Heart right ventricle (tissue), 16 donors: ENCODE measurements at regions of chr3 and their contacts with region 1.

Region 1: DNA sequence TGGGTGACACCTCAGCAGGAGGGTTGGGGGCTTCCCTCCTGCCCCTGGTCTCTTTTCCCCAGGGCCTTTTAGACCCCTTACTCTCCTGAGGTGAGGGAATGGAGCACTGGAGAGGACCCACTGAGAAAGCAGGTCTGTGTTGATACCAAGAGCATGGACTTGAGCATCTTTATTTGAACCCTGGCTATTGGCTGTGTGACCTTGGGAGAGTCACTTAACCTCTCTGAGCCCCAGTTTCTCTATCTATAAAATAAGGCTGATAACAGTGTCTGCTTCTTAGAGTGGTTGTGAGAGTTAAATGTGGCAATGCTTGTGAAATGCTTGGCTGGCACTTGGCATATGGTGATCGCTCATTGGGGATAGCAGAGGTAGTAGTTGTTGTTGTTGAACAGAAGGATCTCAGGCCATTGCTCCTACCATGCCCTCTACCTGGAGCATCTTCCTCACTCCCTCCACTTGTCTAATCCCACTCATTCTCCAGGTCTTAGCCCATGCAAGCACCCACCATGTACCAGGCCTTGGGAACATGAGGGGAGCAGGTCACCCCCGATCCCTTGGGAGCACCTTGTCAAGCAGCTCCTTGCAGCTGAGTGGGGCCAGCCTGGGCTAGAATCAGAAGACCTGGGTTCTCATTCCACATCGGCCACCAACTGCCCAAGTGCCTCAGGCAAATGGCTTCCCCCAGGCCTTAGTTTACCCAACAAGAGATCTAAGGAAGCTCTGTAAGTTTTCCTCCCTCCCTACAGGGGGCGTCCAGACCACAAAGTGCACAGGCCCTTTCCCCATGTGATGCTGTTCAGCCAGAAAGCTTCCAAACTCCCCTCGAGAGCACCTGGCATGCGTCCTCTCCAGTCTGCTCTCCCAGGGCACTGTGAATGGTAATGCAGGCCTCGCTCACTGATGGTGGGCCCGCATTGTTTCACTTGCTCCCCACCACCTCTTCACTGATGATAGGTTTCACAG is 96.7 kb downstream of the LSM3 start:
- DNase-seq: no peak
- ATAC-seq: no peak
- H3K4me3 ChIP-seq: no peak overlapping the region
- H3K27ac ChIP-seq: no peak overlapping the region
- H3K4me1 ChIP-seq: no peaks in the 10 kb centered on the region
- H3K27me3 ChIP-seq: peaks cover 0 to 75% (median 26%) of the 10 kb centered on the region in 7 donors
- CTCF ChIP-seq: peak in 5 of 9 donors; percentile 16 to 45 (median 30)

Region 2: GRCh38 chr3:13623099-13623654 is 652.1 kb before region 1 on chr3:
- intact Hi-C with region 1: no loop called
- DNase-seq: no peak
- ATAC-seq: no peak
- H3K4me3 ChIP-seq: no peak overlapping the region
- H3K27ac ChIP-seq: no peak overlapping the region
- H3K4me1 ChIP-seq: no peaks in the 10 kb centered on the region
- H3K27me3 ChIP-seq: no peaks in the 10 kb centered on the region
- CTCF ChIP-seq: no peak

Region 3: DNA sequence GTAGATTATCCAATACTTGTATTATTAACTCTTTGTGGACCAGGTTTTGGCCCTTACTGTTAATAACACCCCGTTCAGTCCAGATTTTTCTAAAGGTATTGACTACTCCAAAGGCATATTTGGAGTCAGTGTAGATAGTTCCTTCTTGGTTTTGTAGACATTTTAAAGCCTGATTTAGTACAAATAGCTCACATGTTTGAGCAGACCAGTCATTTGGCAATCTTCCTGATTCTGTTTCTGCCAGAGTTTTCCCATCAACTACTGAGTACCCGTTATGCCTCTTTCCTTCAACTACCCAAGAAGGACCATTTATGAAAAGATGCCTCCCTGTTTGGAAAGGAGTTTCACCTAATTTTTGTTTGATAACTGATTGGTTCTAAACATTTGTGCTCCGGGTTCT is 232.6 kb before region 1 on chr3:
- intact Hi-C with region 1: no loop called
- DNase-seq: no peak
- ATAC-seq: no peak
- H3K4me3 ChIP-seq: no peak overlapping the region
- H3K27ac ChIP-seq: no peak overlapping the region
- H3K4me1 ChIP-seq: peaks cover 0 to 23% (median 0%) of the 10 kb centered on the region in 9 donors
- H3K27me3 ChIP-seq: peaks cover 0 to 4% (median 0%) of the 10 kb centered on the region in 7 donors
- CTCF ChIP-seq: no peak

Region 4: GRCh38 chr3:14144423-14145075 is 130.7 kb before region 1 on chr3:
- intact Hi-C with region 1: no loop called
- DNase-seq: peak; percentile 43 to 88
- ATAC-seq: peak; percentile 65 to 92 (median 88)
- H3K4me3 ChIP-seq: peak overlapping the region in 6 of 10 donors; percentile 10 to 40 (median 29)
- H3K27ac ChIP-seq: peak overlapping the region; percentile 33 to 93 (median 84)
- H3K4me1 ChIP-seq: peaks cover 14 to 71% (median 37%) of the 10 kb centered on the region in 9 donors
- H3K27me3 ChIP-seq: no peaks in the 10 kb centered on the region
- CTCF ChIP-seq: no peak

Region 5: DNA sequence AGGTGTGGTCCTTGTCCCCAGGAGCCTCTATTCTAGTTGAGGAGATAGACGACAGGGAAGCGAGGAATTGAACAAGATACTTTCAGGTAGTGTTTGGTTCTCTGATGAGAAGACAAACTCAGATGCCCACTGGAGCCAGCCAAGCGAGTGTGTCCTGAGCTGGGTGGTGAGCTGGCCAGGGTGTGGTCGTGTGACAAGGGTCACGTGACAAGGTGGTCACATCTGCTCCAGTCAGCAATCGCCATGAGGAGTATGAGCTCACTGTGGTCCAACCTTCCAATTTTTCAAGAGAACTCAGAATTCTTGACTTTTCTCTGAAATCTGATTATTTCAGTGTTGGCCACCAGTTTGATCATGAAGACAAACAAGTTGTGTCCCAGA is 166.6 kb after region 1 on chr3:
- intact Hi-C with region 1: no loop called
- DNase-seq: no peak
- ATAC-seq: no peak
- H3K4me3 ChIP-seq: no peak overlapping the region
- H3K27ac ChIP-seq: peak overlapping the region in 4 of 10 donors; percentile 2 to 45 (median 28)
- H3K4me1 ChIP-seq: peaks cover 33 to 62% (median 54%) of the 10 kb centered on the region in 9 donors
- H3K27me3 ChIP-seq: peaks cover 0 to 49% (median 21%) of the 10 kb centered on the region in 7 donors
- CTCF ChIP-seq: no peak

Region 6: DNA sequence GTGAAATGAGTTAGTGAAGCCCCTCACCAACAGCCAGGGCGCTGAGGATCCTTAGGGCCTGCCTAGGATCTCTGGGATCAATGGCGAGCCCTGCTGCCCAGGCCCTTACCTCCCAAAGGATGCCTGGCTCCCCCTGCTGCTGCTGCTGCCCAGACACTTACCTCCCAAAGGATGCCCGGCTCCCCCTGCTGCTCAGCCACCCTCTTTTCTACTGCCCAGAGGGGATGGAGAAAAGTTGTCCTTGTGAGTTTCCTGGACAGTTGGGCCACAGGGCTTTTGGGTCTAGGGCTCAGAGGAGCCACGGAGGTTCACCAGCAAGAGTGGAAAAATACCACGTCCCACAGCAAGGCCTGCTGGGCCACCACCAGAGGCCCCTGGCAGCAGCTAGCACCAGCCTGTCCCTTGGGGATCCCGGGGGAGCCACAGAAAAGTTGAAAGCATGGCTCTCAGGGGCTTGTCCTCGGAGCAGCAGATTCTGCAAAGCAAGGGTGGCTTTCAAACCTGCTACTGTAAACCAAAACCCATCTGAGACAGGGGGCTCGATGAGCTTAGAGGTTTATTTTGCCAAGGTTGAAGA is 186.6 kb after region 1 on chr3:
- intact Hi-C with region 1: loop called in 1 of 10 experiments (anchors 5 kb)
- DNase-seq: peak; percentile 51 to 59
- ATAC-seq: peak in 6 of 8 donors; percentile 35 to 74 (median 60)
- H3K4me3 ChIP-seq: no peak overlapping the region
- H3K27ac ChIP-seq: no peak overlapping the region
- H3K4me1 ChIP-seq: peaks cover 2 to 42% (median 25%) of the 10 kb centered on the region in 9 donors
- H3K27me3 ChIP-seq: peaks cover 0 to 37% (median 4%) of the 10 kb centered on the region in 7 donors
- CTCF ChIP-seq: peak in 8 of 9 donors; percentile 22 to 72 (median 55)